ENCODE measurements at regions of chr6 and their contacts with region 1.

Region 1: DNA sequence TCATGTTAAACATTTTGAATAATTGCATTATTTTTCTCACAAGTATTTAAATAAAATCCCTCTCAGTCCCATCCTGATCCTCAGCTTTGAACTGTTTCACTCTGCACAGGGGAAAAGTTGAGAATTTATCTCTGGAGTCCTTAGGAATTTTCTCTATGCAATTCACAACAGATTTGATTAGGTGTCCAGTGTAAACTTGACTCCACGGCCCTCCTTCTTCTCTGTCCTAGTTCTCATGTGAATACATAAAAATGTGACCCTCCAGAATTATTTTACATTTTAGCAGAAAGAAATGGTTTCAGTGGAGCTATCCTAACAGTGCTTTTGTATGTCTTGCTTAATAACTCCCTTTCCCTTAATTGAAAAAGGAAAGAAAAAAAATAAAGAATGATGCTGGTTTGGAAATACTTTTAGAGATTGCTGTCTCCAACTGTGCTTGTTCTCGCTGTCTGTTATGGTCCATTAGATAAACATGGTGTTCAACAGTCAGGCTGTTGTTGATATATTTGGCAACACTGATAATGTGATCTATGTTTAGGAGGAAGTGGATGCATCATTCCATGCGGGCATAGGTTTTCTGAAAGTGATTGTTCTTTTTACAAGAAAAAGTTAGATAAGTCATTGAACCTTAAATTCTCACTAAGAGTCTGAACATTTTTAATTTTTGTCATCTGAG is 599.4 kb upstream of the CITED2 start:
- DNase-seq: peak; percentile 90
- H3K4me3 ChIP-seq: no peak overlapping the region
- H3K27ac ChIP-seq: peak overlapping the region; percentile 49
- H3K4me1 ChIP-seq: peaks cover 12% of the 10 kb centered on the region
- H3K27me3 ChIP-seq: no peaks in the 10 kb centered on the region
- CTCF ChIP-seq: no peak
- POLR2A ChIP-seq: no peak

Region 2: GRCh38 chr6:139881728-139882211 is 92.0 kb before region 1 on chr6:
- CTCF ChIA-PET with region 1: no interaction called
- POLR2A ChIA-PET with region 1: no interaction called
- dilution Hi-C with region 1: no loop called
- intact Hi-C with region 1: loop called (anchors 2 kb)
- DNase-seq: peak; percentile 69
- H3K4me3 ChIP-seq: no peak overlapping the region
- H3K27ac ChIP-seq: no peak overlapping the region
- H3K4me1 ChIP-seq: peaks cover 14% of the 10 kb centered on the region
- H3K27me3 ChIP-seq: no peaks in the 10 kb centered on the region
- CTCF ChIP-seq: peak; percentile 42 to 49
- POLR2A ChIP-seq: no peak

Region 3: DNA sequence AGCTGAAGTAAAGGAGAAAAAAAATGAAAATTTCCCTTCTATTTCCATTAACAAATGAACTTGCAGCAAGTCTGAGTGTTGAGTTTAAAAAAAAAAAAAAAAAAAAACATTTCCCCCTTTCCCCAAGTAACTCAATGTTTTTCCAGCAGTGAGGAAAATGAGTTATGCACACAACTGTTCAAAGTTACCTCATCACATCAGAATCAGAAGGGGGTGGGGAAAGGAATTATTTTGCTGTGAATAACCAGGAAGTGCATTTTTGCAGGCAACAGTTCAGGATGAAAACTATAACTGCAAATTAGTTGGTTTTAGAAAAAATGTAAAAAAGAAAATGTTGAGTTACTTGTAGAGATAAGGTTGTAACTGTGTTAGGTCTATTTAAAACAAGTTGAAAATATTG is 30.4 kb before region 1 on chr6:
- CTCF ChIA-PET with region 1: interaction called, 3 read pairs
- POLR2A ChIA-PET with region 1: no interaction called
- dilution Hi-C with region 1: no loop called
- intact Hi-C with region 1: loop called (anchors 1 kb)
- DNase-seq: peak; percentile 93
- H3K4me3 ChIP-seq: no peak overlapping the region
- H3K27ac ChIP-seq: peak overlapping the region; percentile 90
- H3K4me1 ChIP-seq: peaks cover 24% of the 10 kb centered on the region
- H3K27me3 ChIP-seq: no peaks in the 10 kb centered on the region
- CTCF ChIP-seq: no peak
- POLR2A ChIP-seq: no peak

Region 4: GRCh38 chr6:140572129-140572528 is 598.3 kb after region 1 on chr6:
- CTCF ChIA-PET with region 1: no interaction called
- POLR2A ChIA-PET with region 1: no interaction called
- dilution Hi-C with region 1: no loop called
- intact Hi-C with region 1: loop called (anchors 10 kb)
- DNase-seq: peak; percentile 96
- H3K4me3 ChIP-seq: no peak overlapping the region
- H3K27ac ChIP-seq: peak overlapping the region; percentile 84
- H3K4me1 ChIP-seq: peaks cover 24% of the 10 kb centered on the region
- H3K27me3 ChIP-seq: no peaks in the 10 kb centered on the region
- CTCF ChIP-seq: no peak
- POLR2A ChIP-seq: peak; percentile 44

Region 5: DNA sequence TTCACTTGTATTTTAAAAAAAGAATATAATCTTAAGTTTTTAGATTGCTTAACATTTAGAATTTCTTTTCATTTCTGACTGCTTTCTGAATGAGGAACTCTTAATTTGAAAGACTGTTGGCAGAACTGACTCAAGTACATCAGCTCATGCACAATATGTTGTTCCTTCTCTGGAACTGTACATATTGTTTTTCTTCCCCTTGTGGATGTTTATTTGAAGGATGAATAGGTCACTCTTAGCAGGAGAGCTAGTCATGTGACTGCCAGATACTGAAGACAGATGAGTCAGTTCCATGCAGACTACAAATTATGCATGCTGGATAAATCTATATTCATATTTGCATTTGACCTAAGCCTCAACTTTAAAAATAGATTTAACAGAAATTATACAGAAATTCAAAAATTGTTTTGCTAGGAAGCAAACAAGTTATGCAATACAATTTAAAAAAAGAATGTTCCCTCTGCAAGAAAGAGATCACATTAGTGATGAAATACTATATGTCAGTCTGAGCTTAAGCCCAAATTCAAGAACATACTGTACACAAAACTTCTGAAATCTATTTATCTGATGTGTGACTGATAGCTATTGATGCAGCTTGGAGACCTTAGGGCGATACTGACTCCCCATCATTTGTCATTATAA is 884.1 kb after region 1 on chr6:
- CTCF ChIA-PET with region 1: no interaction called
- POLR2A ChIA-PET with region 1: no interaction called
- dilution Hi-C with region 1: no loop called
- intact Hi-C with region 1: loop called (anchors 10 kb)
- DNase-seq: peak; percentile 89
- H3K4me3 ChIP-seq: no peak overlapping the region
- H3K27ac ChIP-seq: peak overlapping the region; percentile 74
- H3K4me1 ChIP-seq: peaks cover 26% of the 10 kb centered on the region
- H3K27me3 ChIP-seq: no peaks in the 10 kb centered on the region
- CTCF ChIP-seq: no peak
- POLR2A ChIP-seq: peak; percentile 41